ENCODE measurements at regions of chr4 and their contacts with region 1.

Region 1: GRCh38 chr4:25312496-25313200 is at the start of gene ZCCHC4:
- DNase-seq: peak; percentile 80 to 97 (median 89)
- ATAC-seq: peak; percentile 99
- H3K4me3 ChIP-seq: peak within 1 kb of the TSS; percentile 83 to 95
- H3K4me3 Mint-ChIP-seq: peak within 1 kb of the TSS; percentile 99
- H3K27ac ChIP-seq: peak within 1 kb of the TSS; percentile 48 to 73
- H3K27ac Mint-ChIP-seq: peak within 1 kb of the TSS; percentile 96
- H3K4me1 ChIP-seq: peaks cover 9% of the 10 kb centered on the region
- H3K4me1 Mint-ChIP-seq: peaks cover 27% of the 10 kb centered on the region
- H3K27me3 ChIP-seq: no peaks in the 10 kb centered on the region
- H3K27me3 Mint-ChIP-seq: peaks cover 8% of the 10 kb centered on the region
- CTCF ChIP-seq: peak; percentile 99
- total RNA-seq, gene ZCCHC4: 6.5 to 9.9 TPM

Region 2: GRCh38 chr4:24584175-24584850 is 728.3 kb before region 1 on chr4 and contains the start of gene DHX15:
- CTCF ChIA-PET with region 1: no interaction called
- POLR2A ChIA-PET with region 1: interaction called, 4 read pairs
- intact Hi-C with region 1: loop called in 1 of 2 experiments (anchors 2 kb)
- DNase-seq: peak; percentile 81 to 98 (median 91)
- ATAC-seq: peak; percentile 94
- H3K4me3 ChIP-seq: peak within 1 kb of the TSS; percentile 81 to 97
- H3K4me3 Mint-ChIP-seq: peak within 1 kb of the TSS; percentile 98
- H3K27ac ChIP-seq: peak within 1 kb of the TSS; percentile 90 to 98
- H3K27ac Mint-ChIP-seq: peak within 1 kb of the TSS; percentile 98
- H3K4me1 ChIP-seq: peaks cover 18% of the 10 kb centered on the region
- H3K4me1 Mint-ChIP-seq: peaks cover 43% of the 10 kb centered on the region
- H3K27me3 ChIP-seq: no peaks in the 10 kb centered on the region
- H3K27me3 Mint-ChIP-seq: no peaks in the 10 kb centered on the region
- CTCF ChIP-seq: no peak
- total RNA-seq, gene DHX15: 211 to 221 TPM

Region 3: DNA sequence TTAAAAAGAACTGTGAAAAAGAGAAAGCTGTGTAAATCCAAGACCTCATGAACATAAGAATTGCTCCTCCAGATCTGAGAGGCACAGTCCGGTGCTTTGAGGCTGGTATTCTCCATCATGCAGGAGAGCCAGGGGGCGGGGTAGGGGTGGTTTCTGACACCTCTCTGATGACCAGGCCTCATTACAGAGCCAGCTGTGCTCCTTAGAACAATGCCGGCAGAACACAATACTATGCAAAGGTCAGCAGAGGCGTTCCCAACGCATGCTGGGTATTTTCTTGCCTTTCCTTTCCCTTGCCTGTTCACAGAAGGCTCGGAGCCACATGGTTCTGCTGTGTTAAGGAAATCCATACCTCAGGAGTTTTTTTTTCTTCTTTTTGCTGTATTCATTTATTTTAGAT is 608.5 kb before region 1 on chr4:
- CTCF ChIA-PET with region 1: no interaction called
- POLR2A ChIA-PET with region 1: no interaction called
- intact Hi-C with region 1: no loop called
- DNase-seq: no peak
- ATAC-seq: no peak
- H3K4me3 ChIP-seq: no peak overlapping the region
- H3K4me3 Mint-ChIP-seq: no peak overlapping the region
- H3K27ac ChIP-seq: no peak overlapping the region
- H3K27ac Mint-ChIP-seq: no peak overlapping the region
- H3K4me1 ChIP-seq: no peaks in the 10 kb centered on the region
- H3K4me1 Mint-ChIP-seq: no peaks in the 10 kb centered on the region
- H3K27me3 ChIP-seq: no peaks in the 10 kb centered on the region
- H3K27me3 Mint-ChIP-seq: peaks cover 2% of the 10 kb centered on the region
- CTCF ChIP-seq: no peak

Region 4: DNA sequence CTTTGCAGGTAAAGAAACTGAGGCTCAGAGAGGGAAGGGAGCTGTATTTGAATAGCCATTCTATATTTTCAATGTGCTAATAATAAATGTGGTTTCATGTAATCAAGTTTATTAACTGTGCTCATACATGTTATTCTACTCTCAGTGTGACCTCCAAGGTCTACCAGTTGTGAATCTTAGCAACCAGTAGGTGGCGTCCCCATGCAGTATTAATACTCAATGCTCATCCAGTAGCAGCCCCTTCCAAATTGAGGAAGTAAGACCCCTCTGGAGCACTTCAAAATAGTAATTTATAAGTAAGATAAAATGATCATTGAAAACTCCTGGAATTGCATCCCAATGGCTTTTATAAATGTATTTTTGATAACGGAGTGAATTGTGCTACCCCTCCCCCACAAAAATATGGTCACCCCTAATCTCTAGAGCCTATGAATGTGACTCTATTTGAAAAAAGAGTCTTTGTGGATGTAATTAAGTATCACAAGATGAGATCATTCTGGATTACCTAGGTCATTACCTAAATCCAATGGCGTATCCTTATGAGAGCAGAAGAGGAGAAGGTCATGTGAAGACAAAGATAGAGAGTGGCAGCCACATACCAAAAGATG is 132.0 kb before region 1 on chr4:
- CTCF ChIA-PET with region 1: interaction called, 5 read pairs
- POLR2A ChIA-PET with region 1: interaction called, 4 read pairs
- intact Hi-C with region 1: loop called (anchors 1 to 5 kb)
- DNase-seq: peak in 5 of 9 experiments; percentile 27 to 69 (median 40)
- ATAC-seq: peak; percentile 80
- H3K4me3 ChIP-seq: no peak overlapping the region
- H3K4me3 Mint-ChIP-seq: no peak overlapping the region
- H3K27ac ChIP-seq: no peak overlapping the region
- H3K27ac Mint-ChIP-seq: no peak overlapping the region
- H3K4me1 ChIP-seq: peaks cover 16% of the 10 kb centered on the region
- H3K4me1 Mint-ChIP-seq: peaks cover 18% of the 10 kb centered on the region
- H3K27me3 ChIP-seq: no peaks in the 10 kb centered on the region
- H3K27me3 Mint-ChIP-seq: no peaks in the 10 kb centered on the region
- CTCF ChIP-seq: peak; percentile 89

Region 5: DNA sequence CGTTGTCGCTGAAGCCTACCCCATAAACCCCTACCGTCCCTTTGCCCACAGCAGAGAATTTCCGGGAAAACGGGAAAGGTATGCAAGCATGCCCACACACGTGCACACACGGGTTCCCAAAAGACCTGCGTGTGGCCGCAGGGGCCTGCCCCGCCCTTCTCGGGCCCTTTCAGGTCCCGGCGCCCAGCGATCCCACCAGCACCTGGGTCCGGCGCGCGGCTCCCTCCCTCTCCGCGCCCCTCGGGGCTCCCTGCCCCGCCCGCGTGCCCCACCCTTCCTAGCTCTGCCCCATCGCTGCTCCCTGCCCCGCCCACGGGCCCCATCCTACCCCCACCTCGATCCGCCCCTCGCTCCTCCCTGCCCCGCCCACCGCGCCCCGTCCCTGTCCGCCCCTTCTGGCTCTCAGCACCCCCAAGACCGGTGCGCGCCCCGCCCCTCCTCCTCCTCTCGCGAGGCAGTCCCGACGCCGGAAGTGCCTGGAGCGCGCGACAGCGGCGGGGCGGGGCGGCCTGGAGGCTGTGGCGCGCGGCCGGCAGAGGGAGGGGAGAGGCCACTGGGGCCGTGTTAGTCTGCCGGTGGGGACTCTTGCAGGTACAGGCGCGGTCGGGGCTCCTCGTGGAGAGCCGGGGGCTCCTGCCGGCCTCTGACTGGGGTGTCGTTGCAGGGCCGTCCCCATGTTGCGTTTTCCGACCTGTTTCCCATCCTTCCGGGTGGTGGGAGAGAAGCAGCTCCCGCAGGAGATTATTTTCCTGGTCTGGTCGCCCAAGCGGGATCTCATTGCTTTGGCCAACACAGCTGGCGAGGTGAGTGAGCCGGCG is 64.3 kb after region 1 on chr4 and contains the start of gene ANAPC4:
- CTCF ChIA-PET with region 1: interaction called, 7 read pairs
- POLR2A ChIA-PET with region 1: interaction called, 10 read pairs
- intact Hi-C with region 1: loop called (anchors 1 kb)
- DNase-seq: peak; percentile 95 to 100 (median 98)
- ATAC-seq: peak; percentile 95
- H3K4me3 ChIP-seq: peak within 1 kb of the TSS; percentile 89 to 96
- H3K4me3 Mint-ChIP-seq: no peak within 1 kb of the TSS
- H3K27ac ChIP-seq: peak within 1 kb of the TSS; percentile 60 to 64
- H3K27ac Mint-ChIP-seq: peak within 1 kb of the TSS; percentile 90
- H3K4me1 ChIP-seq: peaks cover 21% of the 10 kb centered on the region
- H3K4me1 Mint-ChIP-seq: peaks cover 16% of the 10 kb centered on the region
- H3K27me3 ChIP-seq: no peaks in the 10 kb centered on the region
- H3K27me3 Mint-ChIP-seq: no peaks in the 10 kb centered on the region
- CTCF ChIP-seq: no peak
- total RNA-seq, gene ANAPC4: 28.0 to 30.5 TPM

Region 6: GRCh38 chr4:25663781-25664180 is 351.1 kb after region 1 on chr4:
- CTCF ChIA-PET with region 1: no interaction called
- POLR2A ChIA-PET with region 1: no interaction called
- intact Hi-C with region 1: no loop called
- DNase-seq: no peak
- ATAC-seq: no peak
- H3K4me3 ChIP-seq: no peak overlapping the region
- H3K4me3 Mint-ChIP-seq: no peak overlapping the region
- H3K27ac ChIP-seq: no peak overlapping the region
- H3K27ac Mint-ChIP-seq: no peak overlapping the region
- H3K4me1 ChIP-seq: no peaks in the 10 kb centered on the region
- H3K4me1 Mint-ChIP-seq: no peaks in the 10 kb centered on the region
- H3K27me3 ChIP-seq: no peaks in the 10 kb centered on the region
- H3K27me3 Mint-ChIP-seq: peaks cover 5% of the 10 kb centered on the region
- CTCF ChIP-seq: no peak

Region 7: GRCh38 chr4:25913851-25914669 is 601.4 kb after region 1 on chr4 and contains the start of gene SMIM20:
- CTCF ChIA-PET with region 1: no interaction called
- POLR2A ChIA-PET with region 1: no interaction called
- intact Hi-C with region 1: loop called (anchors 1 to 5 kb)
- DNase-seq: peak; percentile 81 to 95 (median 87)
- ATAC-seq: peak; percentile 94
- H3K4me3 ChIP-seq: peak within 1 kb of the TSS; percentile 72 to 78
- H3K4me3 Mint-ChIP-seq: peak within 1 kb of the TSS; percentile 97
- H3K27ac ChIP-seq: peak within 1 kb of the TSS; percentile 81 to 95
- H3K27ac Mint-ChIP-seq: peak within 1 kb of the TSS; percentile 98
- H3K4me1 ChIP-seq: peaks cover 18% of the 10 kb centered on the region
- H3K4me1 Mint-ChIP-seq: peaks cover 24% of the 10 kb centered on the region
- H3K27me3 ChIP-seq: no peaks in the 10 kb centered on the region
- H3K27me3 Mint-ChIP-seq: no peaks in the 10 kb centered on the region
- CTCF ChIP-seq: no peak
- total RNA-seq, gene SMIM20: 7.5 to 9.8 TPM

Measured in CD8-positive, alpha-beta T cell (primary cell).